Right cardiac atrium (tissue), 5 donors: ENCODE measurements at regions of chr6 and their contacts with region 1.

Region 1: DNA sequence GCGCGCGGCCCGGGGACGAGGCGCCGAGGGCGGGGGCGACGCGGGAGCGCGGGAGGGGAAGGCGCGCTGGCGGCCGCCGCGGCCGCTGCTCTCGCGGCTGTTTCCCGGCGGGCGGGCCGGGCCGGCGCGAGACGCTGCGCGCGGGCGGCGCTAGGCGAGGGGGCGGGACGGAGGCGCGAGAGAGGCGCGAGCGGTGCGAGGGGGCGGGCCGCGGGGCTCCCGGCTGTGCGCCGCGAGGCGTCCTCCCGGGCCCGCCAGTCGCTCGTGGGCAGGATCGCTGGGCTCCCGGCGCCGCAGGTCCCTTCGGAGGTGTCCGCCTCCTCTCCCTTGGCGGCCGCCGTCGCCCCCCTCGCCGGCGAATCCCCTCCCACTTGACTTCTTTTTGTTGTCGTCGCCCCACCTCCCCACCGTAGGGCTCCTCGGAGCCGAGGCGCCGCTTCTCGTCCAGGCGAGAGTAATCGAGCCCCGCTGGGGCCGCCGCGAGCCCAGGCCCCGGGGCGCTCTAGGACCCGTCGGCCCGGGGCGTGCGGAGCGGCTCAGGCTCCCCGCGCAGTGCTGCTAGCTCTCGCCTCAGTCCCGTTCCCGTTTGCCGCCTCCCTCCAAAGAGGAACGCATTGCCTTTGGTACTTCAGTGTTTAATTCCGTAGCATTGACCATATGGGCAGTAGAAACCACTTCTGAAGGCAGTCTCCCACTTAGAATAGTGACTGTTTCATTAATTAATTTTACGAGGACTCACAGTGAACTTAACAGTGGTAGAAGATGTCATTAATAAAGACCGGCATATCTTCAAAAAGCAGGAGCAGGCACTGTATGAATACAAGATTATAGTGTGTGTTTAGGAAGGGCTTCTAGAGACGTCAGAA is at the start of gene RANBP9:
- DNase-seq: peak; percentile 89 to 96 (median 95)
- ATAC-seq: peak; percentile 95 to 96
- H3K4me3 ChIP-seq: peak within 1 kb of the TSS; percentile 99
- H3K27ac ChIP-seq: peak within 1 kb of the TSS; percentile 95
- H3K4me1 ChIP-seq: peaks cover 5% of the 10 kb centered on the region
- H3K27me3 ChIP-seq: no peaks in the 10 kb centered on the region
- total RNA-seq, gene RANBP9: 31.1 to 35.4 (median 33.0) TPM

Region 2: DNA sequence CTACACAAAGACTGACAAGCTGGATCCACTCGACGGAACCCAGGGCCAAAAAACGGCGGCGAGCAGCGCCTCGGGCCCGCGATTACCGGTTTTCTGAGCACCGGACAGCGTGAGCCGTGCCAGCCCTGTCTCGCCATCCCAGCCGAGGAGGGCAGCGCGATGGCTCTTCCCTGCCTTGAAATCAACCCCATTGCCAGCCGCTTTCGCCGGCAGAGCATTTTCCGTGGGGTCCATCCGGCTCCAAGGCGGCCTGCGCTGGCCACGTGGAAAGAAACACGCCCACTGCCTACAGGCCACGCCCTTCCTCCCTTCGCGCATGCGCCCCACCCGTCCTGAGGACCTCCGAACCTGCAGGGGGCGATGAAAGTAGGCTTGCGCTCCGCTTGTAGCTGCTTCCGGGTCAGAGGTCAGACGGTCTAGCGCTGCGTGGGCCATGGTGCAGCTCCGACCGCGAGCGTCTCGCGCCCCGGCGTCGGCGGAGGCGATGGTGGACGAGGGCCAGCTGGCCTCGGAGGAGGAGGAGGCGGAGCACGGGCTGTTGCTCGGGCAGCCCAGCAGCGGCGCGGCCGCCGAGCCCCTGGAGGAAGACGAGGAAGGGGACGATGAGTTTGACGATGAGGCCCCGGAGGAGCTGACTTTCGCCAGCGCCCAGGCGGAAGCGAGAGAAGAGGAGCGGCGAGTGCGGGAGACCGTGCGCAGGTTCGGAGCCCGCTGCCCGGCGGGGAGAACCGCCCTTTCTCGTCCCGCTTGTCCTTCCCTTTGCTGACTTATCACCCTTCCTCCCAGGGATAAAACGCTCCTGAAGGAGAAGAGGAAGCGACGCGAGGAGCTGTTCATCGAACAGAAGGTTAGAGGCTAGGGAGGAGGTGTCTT is 96.8 kb before region 1 on chr6 and contains the start of gene NOL7:
- intact Hi-C with region 1: loop called in 3 of 4 experiments (anchors 2 to 10 kb)
- DNase-seq: peak; percentile 98 to 99 (median 98)
- ATAC-seq: peak; percentile 97 to 98
- H3K4me3 ChIP-seq: peak within 1 kb of the TSS; percentile 81
- H3K27ac ChIP-seq: peak within 1 kb of the TSS; percentile 84
- H3K4me1 ChIP-seq: no peaks in the 10 kb centered on the region
- H3K27me3 ChIP-seq: no peaks in the 10 kb centered on the region
- total RNA-seq, gene NOL7: 44.7 to 56.5 (median 52.0) TPM

Region 3: DNA sequence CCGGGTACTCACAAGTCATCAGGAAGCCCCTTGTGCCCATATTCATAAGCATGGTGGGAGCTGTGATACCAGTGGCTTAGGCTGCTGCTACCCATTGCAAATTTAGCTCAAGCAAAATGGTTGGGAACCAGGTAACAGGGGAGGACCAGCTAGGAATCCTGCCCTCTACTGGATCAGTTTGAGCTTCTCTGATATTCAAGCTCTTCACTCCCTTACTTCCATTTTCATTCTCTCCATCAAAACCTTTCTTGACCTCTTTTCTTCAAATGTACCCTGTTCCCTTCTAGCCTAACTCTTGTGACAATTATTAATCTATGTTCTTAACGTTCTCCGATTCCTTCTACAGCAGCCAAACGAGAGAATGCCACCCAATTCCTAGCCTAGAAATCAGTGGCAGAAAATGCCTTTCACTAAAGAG is 87.1 kb before region 1 on chr6:
- intact Hi-C with region 1: loop called in 2 of 4 experiments (anchors 10 kb)
- DNase-seq: no peak
- ATAC-seq: peak in 1 of 2 donors; percentile 47
- H3K4me3 ChIP-seq: no peak overlapping the region
- H3K27ac ChIP-seq: no peak overlapping the region
- H3K4me1 ChIP-seq: no peaks in the 10 kb centered on the region
- H3K27me3 ChIP-seq: no peaks in the 10 kb centered on the region

Region 4: GRCh38 chr6:13635948-13636658 is 75.9 kb before region 1 on chr6:
- intact Hi-C with region 1: loop called in 1 of 4 experiments (anchors 10 kb)
- DNase-seq: no peak
- ATAC-seq: no peak
- H3K4me3 ChIP-seq: no peak overlapping the region
- H3K27ac ChIP-seq: no peak overlapping the region
- H3K4me1 ChIP-seq: no peaks in the 10 kb centered on the region
- H3K27me3 ChIP-seq: no peaks in the 10 kb centered on the region

Region 5: GRCh38 chr6:13767121-13767808 is 55.3 kb after region 1 on chr6:
- intact Hi-C with region 1: loop called in 1 of 4 experiments (anchors 5 kb)
- DNase-seq: peak; percentile 38 to 71 (median 67)
- ATAC-seq: peak; percentile 83
- H3K4me3 ChIP-seq: peak overlapping the region; percentile 66
- H3K27ac ChIP-seq: no peak overlapping the region
- H3K4me1 ChIP-seq: no peaks in the 10 kb centered on the region
- H3K27me3 ChIP-seq: no peaks in the 10 kb centered on the region